Endothelial cell of umbilical vein (primary cell): ENCODE measurements at regions of chr18 and their contacts with region 1.

Region 1: DNA sequence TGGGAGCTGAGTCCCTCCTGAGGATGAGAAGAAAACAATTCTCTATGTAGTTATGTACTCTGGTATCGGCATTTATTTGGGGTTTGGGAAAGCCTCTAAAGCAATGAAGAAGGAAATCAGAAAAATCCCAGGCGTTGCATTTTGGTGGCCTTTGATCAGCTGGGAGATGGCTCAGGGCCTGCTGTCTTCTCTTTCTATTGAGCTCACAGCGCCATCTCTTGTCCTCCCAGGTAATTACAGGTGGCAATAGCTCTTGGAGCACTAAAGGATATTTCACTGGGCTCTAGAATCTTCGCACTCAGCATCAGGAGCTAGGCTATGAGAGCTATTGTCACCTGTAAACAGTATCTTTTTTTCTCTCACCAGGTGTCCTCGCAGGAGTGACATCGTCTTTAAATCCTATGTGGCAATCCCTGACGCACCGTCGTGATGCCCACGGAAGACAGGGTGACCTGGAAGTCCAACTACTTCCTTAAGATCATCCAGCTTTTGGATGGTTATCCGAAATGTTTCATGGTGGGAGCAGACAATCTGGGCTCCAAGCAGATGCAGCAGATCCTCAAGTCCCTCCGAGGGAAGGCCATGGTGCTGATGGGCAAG is 76.1 kb upstream of the PMAIP1 start:
- DNase-seq: peak; percentile 51
- H3K4me3 ChIP-seq: no peak overlapping the region
- H3K27ac ChIP-seq: no peak overlapping the region
- H3K4me1 ChIP-seq: no peaks in the 10 kb centered on the region
- H3K27me3 ChIP-seq: no peaks in the 10 kb centered on the region
- CTCF ChIP-seq: peak; percentile 52 to 69
- POLR2A ChIP-seq: no peak

Region 2: DNA sequence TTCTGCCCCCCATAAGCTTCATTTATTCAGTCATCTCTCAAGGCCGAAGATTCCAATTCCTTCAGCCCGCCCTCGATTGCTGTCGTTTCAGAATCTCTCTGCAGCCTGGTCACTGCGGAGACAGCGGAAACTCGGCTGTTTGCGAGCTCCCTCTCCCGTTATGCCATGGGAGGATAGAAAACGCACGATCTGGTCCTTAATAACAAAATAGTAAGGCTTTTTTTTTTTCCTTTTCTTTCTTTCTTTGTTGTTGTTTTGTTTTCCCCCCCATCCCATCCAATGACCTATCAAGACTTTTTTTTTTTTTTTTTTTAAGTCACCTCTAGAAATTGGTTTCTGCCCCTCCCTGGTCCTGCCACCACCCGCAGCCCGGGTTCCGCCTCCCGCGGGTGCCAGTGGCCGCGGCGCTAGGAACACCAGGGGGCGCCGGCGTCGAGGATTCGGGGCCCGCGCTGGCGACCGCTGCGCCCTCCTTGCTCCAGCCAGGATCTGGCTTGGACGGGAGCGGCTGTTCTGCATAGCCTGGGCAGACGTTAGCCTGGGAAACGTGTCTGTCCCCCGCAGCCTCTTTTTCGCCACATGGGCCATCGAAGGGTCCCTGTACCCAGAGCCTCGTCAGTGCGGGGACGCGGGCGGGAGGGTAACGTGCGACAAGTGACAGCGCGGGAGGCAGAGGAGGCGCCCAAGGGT is 515.3 kb before region 1 on chr18:
- CTCF ChIA-PET with region 1: interaction called, 51 read pairs
- POLR2A ChIA-PET with region 1: no interaction called
- dilution Hi-C with region 1: no loop called
- intact Hi-C with region 1: no loop called
- DNase-seq: peak; percentile 50
- H3K4me3 ChIP-seq: no peak overlapping the region
- H3K27ac ChIP-seq: no peak overlapping the region
- H3K4me1 ChIP-seq: peaks cover 3% of the 10 kb centered on the region
- H3K27me3 ChIP-seq: peaks cover 17 to 29% of the 10 kb centered on the region in 2 experiments
- CTCF ChIP-seq: peak; percentile 74 to 83
- POLR2A ChIP-seq: no peak

Region 3: GRCh38 chr18:59570101-59570775 is 253.5 kb before region 1 on chr18:
- CTCF ChIA-PET with region 1: interaction called, 11 read pairs
- POLR2A ChIA-PET with region 1: no interaction called
- dilution Hi-C with region 1: no loop called
- intact Hi-C with region 1: no loop called
- DNase-seq: no peak
- H3K4me3 ChIP-seq: no peak overlapping the region
- H3K27ac ChIP-seq: no peak overlapping the region
- H3K4me1 ChIP-seq: no peaks in the 10 kb centered on the region
- H3K27me3 ChIP-seq: no peaks in the 10 kb centered on the region
- CTCF ChIP-seq: no peak
- POLR2A ChIP-seq: no peak

Region 4: DNA sequence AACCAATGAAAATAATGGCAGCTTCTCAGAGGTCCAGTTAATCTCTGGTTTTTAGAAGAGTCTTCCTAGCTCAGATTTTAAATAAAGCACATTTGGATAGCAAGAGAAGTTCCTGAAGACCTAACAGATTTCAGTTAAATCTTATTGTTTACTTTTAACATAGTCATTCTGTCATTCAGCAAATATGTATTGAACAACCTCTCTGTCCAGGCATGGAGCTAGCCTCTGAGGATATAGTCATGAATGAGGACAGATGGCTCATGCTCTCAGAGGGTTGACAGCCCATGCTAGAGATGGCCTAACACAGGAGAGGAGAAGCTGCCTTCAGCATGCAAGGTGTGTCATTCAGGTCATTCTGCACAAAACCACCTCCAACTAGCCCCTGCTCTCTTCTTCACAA is 132.7 kb before region 1 on chr18:
- CTCF ChIA-PET with region 1: interaction called, 246 read pairs
- POLR2A ChIA-PET with region 1: no interaction called
- dilution Hi-C with region 1: no loop called
- intact Hi-C with region 1: no loop called
- DNase-seq: no peak
- H3K4me3 ChIP-seq: no peak overlapping the region
- H3K27ac ChIP-seq: no peak overlapping the region
- H3K4me1 ChIP-seq: no peaks in the 10 kb centered on the region
- H3K27me3 ChIP-seq: peaks cover 10 to 13% of the 10 kb centered on the region in 2 experiments
- CTCF ChIP-seq: no peak
- POLR2A ChIP-seq: no peak

Region 5: GRCh38 chr18:59763541-59764136 is 60.1 kb before region 1 on chr18:
- CTCF ChIA-PET with region 1: interaction called, 11 read pairs
- POLR2A ChIA-PET with region 1: no interaction called
- dilution Hi-C with region 1: no loop called
- intact Hi-C with region 1: no loop called
- DNase-seq: no peak
- H3K4me3 ChIP-seq: no peak overlapping the region
- H3K27ac ChIP-seq: no peak overlapping the region
- H3K4me1 ChIP-seq: no peaks in the 10 kb centered on the region
- H3K27me3 ChIP-seq: no peaks in the 10 kb centered on the region
- CTCF ChIP-seq: no peak
- POLR2A ChIP-seq: no peak

Region 6: GRCh38 chr18:59837586-59837985 is 13.9 kb after region 1 on chr18:
- CTCF ChIA-PET with region 1: interaction called, 13 read pairs
- POLR2A ChIA-PET with region 1: no interaction called
- dilution Hi-C with region 1: no loop called
- intact Hi-C with region 1: no loop called
- DNase-seq: peak; percentile 75
- H3K4me3 ChIP-seq: no peak overlapping the region
- H3K27ac ChIP-seq: no peak overlapping the region
- H3K4me1 ChIP-seq: no peaks in the 10 kb centered on the region
- H3K27me3 ChIP-seq: peaks cover 14 to 27% of the 10 kb centered on the region in 2 experiments
- CTCF ChIP-seq: peak; percentile 82 to 83
- POLR2A ChIP-seq: no peak